Left cardiac atrium (tissue), 4 donors: ENCODE measurements at regions of chr19 and their contacts with region 1.

Region 1: GRCh38 chr19:4182084-4182810 is at the starts of genes ANKRD24 and SIRT6:
- DNase-seq: peak; percentile 96
- ATAC-seq: peak; percentile 97
- total RNA-seq, gene ANKRD24: 0.86 to 1.2 TPM
- total RNA-seq, gene SIRT6: 13.0 to 21.8 TPM

Region 2: DNA sequence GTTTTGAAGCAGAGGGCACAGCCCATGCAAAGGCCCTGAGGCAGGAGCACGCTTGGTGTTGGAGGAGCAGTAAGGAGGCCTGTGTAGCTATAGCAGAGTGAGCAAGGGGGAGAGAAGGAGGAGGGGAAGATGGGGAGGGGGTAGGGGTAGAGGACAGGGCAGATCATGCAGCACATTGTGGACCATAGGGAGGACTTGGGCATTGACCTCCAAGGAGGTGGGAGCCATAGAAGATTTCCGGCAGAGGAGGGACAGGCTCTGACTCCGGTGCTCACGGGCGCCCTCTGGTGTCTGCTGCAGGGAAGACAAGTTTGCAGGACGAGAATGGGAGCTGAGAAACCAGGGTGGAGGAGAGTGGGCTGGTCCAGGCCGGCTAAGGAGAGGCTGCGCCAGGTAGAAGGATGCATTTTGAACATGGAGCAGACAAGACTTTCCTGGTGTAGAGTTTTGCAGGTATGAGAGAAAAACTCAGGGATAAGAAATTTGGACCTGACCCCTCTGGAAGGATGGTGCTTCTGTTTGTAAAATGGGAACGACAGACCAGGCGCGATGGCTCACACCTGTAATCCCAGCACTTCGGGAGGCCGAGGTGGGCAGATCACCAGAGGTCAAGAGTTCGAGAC is 42.5 kb before region 1 on chr19:
- intact Hi-C with region 1: loop called in 1 of 2 experiments (anchors 5 kb)
- DNase-seq: peak; percentile 68
- ATAC-seq: peak; percentile 87 to 93

Region 3: GRCh38 chr19:4208385-4209094 is 26.3 kb after region 1 on chr19:
- intact Hi-C with region 1: no loop called
- DNase-seq: no peak
- ATAC-seq: no peak